Activated CD4-positive, alpha-beta T cell treated with anti-CD3 and anti-CD28 coated beads for 36 hours (primary cell): ENCODE measurements at regions of chr12 and their contacts with region 1.

Region 1: DNA sequence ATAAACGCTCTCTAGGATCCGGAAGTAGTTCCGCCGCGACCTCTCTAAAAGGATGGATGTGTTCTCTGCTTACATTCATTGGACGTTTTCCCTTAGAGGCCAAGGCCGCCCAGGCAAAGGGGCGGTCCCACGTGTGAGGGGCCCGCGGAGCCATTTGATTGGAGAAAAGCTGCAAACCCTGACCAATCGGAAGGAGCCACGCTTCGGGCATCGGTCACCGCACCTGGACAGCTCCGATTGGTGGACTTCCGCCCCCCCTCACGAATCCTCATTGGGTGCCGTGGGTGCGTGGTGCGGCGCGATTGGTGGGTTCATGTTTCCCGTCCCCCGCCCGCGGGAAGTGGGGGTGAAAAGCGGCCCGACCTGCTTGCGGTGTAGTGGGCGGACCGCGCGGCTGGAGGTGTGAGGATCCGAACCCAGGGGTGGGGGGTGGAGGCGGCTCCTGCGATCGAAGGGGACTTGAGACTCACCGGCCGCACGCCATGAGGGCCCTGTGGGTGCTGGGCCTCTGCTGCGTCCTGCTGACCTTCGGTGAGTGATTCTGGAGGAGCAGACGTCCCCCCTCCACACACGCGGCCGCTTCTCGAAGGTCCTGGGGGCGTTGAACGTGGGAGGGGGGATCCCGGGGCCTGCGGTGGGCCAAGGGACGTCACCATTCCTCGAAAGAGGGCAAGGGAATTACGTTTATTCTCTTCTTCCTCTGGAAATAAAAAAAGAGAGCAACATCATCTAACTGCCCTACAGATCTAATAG is at the start of gene HSP90B1:
- DNase-seq: peak; percentile 100
- ATAC-seq: peak; percentile 75
- H3K4me3 Mint-ChIP-seq: peak within 1 kb of the TSS; percentile 77
- H3K27ac Mint-ChIP-seq: peak within 1 kb of the TSS; percentile 100
- H3K4me1 Mint-ChIP-seq: peaks cover 54% of the 10 kb centered on the region
- H3K27me3 Mint-ChIP-seq: no peaks in the 10 kb centered on the region
- total RNA-seq, gene HSP90B1: 384 to 394 TPM

Region 2: DNA sequence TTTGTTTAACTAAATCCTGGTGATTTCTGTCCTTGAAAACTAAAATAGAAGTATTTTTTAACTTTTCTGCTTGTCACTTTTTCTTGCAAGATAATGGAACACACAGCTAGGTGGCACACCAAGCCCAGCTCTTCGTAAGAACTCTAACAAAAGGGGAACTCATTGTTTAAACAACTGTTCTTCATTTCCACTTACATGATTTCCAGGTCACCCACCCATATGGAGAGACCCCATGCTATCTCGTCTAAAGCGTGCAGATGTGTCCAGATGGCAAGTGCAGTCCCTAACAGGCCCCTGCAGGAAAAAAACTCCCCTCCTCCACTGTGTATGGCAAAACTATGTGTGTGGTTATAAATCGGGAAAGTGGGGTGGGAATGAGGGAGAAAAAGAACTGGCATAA is 45.9 kb before region 1 on chr12:
- CTCF ChIA-PET with region 1: interaction called, 6 read pairs
- POLR2A ChIA-PET with region 1: interaction called, 3 read pairs
- intact Hi-C with region 1: loop called (anchors 2 kb)
- DNase-seq: peak; percentile 66
- ATAC-seq: peak; percentile 57
- H3K4me3 Mint-ChIP-seq: no peak overlapping the region
- H3K27ac Mint-ChIP-seq: no peak overlapping the region
- H3K4me1 Mint-ChIP-seq: peaks cover 18% of the 10 kb centered on the region
- H3K27me3 Mint-ChIP-seq: no peaks in the 10 kb centered on the region

Region 3: DNA sequence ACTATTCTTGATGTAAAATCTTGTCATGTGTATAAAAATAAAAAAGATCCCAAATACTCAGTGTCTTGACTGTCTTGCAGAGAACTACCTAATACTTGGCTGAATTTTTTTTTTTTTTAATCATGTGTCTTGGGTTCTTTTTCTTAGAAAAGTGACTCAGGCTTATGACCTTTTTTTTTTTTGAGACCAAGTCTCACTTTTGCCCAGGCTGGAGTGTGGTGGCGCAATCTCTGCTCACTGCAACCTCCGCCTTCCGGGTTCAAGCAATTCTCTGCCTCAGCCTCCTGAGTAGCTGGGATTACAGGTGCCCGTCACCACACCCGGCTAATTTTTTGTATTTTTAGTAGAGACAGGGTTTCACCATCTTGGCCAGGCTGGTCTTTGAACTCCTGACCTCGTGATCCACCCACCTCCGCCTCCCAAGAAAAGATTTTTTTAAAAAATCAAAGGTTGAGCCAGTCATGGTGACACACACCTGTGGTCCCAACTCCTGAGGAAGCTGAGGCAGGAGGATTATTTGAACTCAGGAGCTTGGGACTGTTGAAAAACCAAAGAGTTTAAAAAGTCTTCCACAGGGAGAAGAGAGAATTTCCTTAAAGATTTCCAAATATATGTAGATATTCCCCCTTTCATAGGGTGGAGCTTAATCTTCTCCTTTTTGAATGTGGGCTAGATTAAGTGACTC is 17.8 kb after region 1 on chr12:
- CTCF ChIA-PET with region 1: interaction called, 5 read pairs
- POLR2A ChIA-PET with region 1: no interaction called
- intact Hi-C with region 1: loop called (anchors 1 kb)
- DNase-seq: no peak
- ATAC-seq: no peak
- H3K4me3 Mint-ChIP-seq: no peak overlapping the region
- H3K27ac Mint-ChIP-seq: peak overlapping the region; percentile 72
- H3K4me1 Mint-ChIP-seq: peaks cover 65% of the 10 kb centered on the region
- H3K27me3 Mint-ChIP-seq: no peaks in the 10 kb centered on the region

Region 4: DNA sequence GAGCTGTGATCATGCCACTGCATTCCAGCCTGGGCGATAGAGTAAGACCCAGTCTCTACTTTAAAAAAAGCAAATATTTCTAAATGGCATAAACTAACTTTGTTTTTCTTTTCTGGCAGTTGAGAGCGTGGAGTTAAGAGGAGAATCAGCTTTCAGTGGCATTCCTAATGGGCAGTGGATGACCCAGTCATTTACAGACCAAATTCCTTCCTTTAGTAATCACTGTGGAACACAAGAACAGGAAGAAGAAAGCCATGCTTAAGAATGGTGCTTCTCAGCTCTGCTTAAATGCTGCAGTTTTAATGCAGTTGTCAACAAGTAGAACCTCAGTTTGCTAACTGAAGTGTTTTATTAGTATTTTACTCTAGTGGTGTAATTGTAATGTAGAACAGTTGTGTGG is 56.6 kb after region 1 on chr12:
- CTCF ChIA-PET with region 1: no interaction called
- POLR2A ChIA-PET with region 1: no interaction called
- intact Hi-C with region 1: no loop called
- DNase-seq: no peak
- ATAC-seq: no peak
- H3K4me3 Mint-ChIP-seq: no peak overlapping the region
- H3K27ac Mint-ChIP-seq: no peak overlapping the region
- H3K4me1 Mint-ChIP-seq: no peaks in the 10 kb centered on the region
- H3K27me3 Mint-ChIP-seq: no peaks in the 10 kb centered on the region

Region 5: DNA sequence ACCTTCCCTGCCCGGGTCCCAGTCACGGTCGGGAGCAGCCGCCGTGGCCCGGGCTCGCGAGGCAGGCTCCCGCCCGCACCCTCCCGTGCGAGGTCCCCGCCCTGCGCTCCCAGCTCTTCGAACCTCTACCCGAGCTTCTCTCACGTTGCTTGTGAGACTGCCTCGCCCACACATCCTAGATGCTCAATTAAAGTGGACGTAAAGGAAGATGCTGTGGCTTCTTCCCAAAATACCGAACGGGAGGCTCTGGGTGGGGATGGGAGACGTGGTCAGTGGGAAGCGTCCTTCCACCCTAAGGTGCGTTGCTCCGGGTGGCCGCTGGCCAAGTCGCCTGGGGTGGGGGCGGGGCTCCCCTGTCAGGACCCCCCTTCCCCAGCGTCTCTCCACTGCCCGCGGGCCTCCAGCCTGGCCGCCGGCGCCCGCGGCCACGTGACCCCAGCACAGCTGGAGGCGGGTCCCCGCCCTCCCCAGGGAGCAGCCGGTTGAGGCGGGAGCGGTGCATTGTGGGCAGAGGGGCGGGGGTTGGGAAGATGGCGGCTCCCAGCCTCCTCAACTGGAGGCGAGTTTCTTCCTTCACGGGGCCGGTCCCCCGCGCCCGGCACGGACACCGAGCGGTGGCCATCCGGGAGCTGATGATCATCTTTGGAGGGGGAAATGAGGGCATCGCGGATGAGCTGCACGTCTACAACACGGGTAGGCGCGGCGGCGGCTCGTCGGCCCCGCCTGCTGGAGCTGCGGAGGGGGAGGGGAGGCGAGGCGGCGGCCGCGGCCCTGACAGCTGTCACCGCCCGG is 134.0 kb after region 1 on chr12 and contains the start of gene HCFC2:
- CTCF ChIA-PET with region 1: no interaction called
- POLR2A ChIA-PET with region 1: no interaction called
- intact Hi-C with region 1: loop called (anchors 1 to 5 kb)
- DNase-seq: peak; percentile 95
- ATAC-seq: peak; percentile 95
- H3K4me3 Mint-ChIP-seq: peak within 1 kb of the TSS; percentile 85
- H3K27ac Mint-ChIP-seq: peak within 1 kb of the TSS; percentile 89
- H3K4me1 Mint-ChIP-seq: peaks cover 20% of the 10 kb centered on the region
- H3K27me3 Mint-ChIP-seq: peaks cover 7% of the 10 kb centered on the region
- total RNA-seq, gene HCFC2: 6.4 to 6.5 TPM

Region 6: GRCh38 chr12:104137913-104138796 is 207.9 kb after region 1 on chr12 and contains the start of gene NFYB:
- CTCF ChIA-PET with region 1: no interaction called
- POLR2A ChIA-PET with region 1: interaction called, 7 read pairs
- intact Hi-C with region 1: loop called (anchors 1 to 5 kb)
- DNase-seq: peak; percentile 95
- ATAC-seq: peak; percentile 98
- H3K4me3 Mint-ChIP-seq: peak within 1 kb of the TSS; percentile 83
- H3K27ac Mint-ChIP-seq: peak within 1 kb of the TSS; percentile 90
- H3K4me1 Mint-ChIP-seq: peaks cover 19% of the 10 kb centered on the region
- H3K27me3 Mint-ChIP-seq: no peaks in the 10 kb centered on the region
- total RNA-seq, gene NFYB: 18.8 to 27.2 TPM